ENCODE measurements at regions of chr12 and their contacts with region 1.

Region 1: GRCh38 chr12:43789941-43790340 is 16.2 kb downstream of the TWF1 start:
- DNase-seq: no peak

Region 2: DNA sequence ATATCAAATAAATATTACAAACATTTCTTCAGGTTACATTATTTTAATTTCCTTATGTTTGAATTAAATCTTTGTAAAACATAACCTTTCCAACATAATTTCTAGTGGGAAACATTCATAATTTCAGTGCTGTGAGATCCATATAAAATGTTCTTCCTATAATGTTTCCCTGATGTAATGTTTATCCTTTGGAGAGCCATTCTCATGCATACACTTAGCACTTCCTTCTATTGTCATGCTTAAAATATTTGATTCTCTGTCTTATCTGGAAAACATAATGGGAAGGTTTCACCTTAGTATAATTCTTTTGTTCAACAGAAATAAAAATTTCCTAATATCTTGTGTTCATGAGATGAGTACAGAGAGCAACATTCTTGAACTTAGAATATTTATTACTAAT is 710.5 kb before region 1 on chr12:
- in situ Hi-C with region 1: no loop called
- DNase-seq: no peak

Region 3: GRCh38 chr12:43882578-43883178 is 92.7 kb after region 1 on chr12:
- in situ Hi-C with region 1: loop called (anchors 10 kb)
- DNase-seq: peak; percentile 80

Measured in SK-MEL-5 (cell line).